ENCODE measurements at regions of chr16 and their contacts with region 1.

Region 1: GRCh38 chr16:62985722-62986121 is 949.5 kb upstream of the CDH8 start:
- DNase-seq: no peak
- ATAC-seq: no peak
- H3K4me3 ChIP-seq: no peak overlapping the region
- H3K27ac ChIP-seq: no peak overlapping the region
- H3K4me1 ChIP-seq: no peaks in the 10 kb centered on the region
- H3K27me3 ChIP-seq: no peaks in the 10 kb centered on the region
- CTCF ChIP-seq: no peak

Region 2: DNA sequence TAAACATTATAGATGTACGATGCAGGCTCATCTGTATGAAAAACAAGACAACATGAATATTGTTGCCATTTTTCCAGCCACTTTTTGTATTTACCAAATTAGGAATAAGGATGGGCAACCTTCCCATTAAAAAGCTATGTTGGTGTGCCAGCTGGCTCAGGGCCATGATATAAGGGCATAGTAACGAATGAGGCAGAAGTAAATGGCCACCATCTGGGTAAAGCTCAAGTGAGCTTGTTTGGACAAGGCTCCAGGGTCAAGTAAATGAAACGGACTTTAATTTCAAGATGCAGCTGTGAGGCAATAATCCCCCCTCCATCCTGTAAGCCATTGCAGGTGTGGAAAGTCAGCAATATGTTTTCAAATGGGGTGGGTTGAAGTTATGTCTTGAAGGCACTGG is 18.6 kb before region 1 on chr16:
- CTCF ChIA-PET with region 1: no interaction called
- POLR2A ChIA-PET with region 1: interaction called, 11 read pairs
- in situ Hi-C with region 1: no loop called
- intact Hi-C with region 1: no loop called
- DNase-seq: no peak
- ATAC-seq: no peak
- H3K4me3 ChIP-seq: no peak overlapping the region
- H3K27ac ChIP-seq: no peak overlapping the region
- H3K4me1 ChIP-seq: no peaks in the 10 kb centered on the region
- H3K27me3 ChIP-seq: no peaks in the 10 kb centered on the region
- CTCF ChIP-seq: no peak

Measured in Panc1 (cell line).